ENCODE measurements at regions of chr6 and their contacts with region 1.

Region 1: GRCh38 chr6:83884523-83884922 is 25.0 kb downstream of the CYB5R4 start:
- DNase-seq: no peak
- ATAC-seq: peak; percentile 67

Region 2: GRCh38 chr6:84218091-84218490 is 333.6 kb after region 1 on chr6:
- intact Hi-C with region 1: loop called (anchors 5 kb)
- DNase-seq: no peak
- ATAC-seq: no peak

Measured in Right ventricle myocardium superior (tissue), 1 donor.